Common myeloid progenitor, CD34-positive (primary cell): ENCODE measurements at regions of chr1 and their contacts with region 1.

Region 1: DNA sequence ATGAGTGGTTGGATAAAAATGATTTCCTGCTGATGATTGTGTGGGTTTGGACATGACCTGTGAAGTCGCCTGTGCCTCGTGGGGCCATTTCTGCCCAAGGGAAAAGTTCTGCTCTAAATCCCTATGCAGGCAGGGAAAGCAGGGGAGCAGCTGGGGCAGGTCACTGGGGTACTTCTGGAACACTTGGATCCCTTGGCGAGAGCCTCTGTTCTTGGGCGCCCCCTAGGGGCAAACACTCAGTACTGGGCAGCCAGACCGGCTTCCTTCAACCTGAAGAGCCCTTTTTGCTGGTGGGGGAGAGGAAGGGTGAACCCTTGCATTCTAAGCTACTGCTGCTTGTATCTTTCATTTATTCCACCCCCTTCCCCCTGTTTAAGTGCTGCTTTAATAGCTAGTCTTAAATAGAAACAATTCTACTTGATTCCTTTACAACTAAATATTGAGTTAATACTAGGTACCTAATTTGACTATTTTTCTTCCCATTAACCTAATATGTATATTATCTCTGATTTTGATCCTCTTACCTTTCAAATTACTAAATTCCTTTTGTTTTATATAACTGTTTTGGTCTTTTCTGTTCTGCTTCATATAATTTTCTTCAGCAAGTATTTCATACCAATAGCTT is 5.1 kb upstream of the CLEC20A start:
- DNase-seq: peak; percentile 58 to 80 (median 73)
- H3K4me3 ChIP-seq: no peak overlapping the region
- H3K27ac ChIP-seq: no peak overlapping the region
- H3K4me1 ChIP-seq: peaks cover 0 to 3% (median 0%) of the 10 kb centered on the region in 4 experiments
- H3K27me3 ChIP-seq: peaks cover 0 to 2% (median 0%) of the 10 kb centered on the region in 5 experiments

Region 2: DNA sequence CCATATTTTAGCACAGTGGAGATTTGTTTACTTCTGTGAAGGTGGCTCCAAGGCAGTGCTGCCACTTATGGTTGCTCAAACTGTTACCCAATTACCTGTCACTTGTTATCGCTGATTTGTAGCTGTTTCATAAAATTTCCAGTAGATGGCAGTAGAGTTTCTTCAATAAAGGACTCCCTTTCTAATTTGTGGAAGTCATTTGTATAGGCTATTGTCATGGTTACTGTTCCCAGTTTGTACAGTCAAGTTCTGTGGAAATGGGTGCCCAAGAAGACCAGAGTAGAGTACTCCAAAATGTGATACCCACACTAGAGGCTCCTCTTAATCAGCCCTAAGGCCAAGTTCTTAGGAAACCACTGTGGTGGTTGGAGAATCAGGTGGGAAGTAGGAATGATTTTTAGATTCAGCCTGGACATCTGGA is 191.1 kb before region 1 on chr1:
- CTCF ChIA-PET with region 1: interaction called, 20 read pairs
- POLR2A ChIA-PET with region 1: no interaction called
- DNase-seq: peak; percentile 68 to 82 (median 75)
- H3K4me3 ChIP-seq: no peak overlapping the region
- H3K27ac ChIP-seq: no peak overlapping the region
- H3K4me1 ChIP-seq: peaks cover 0 to 7% (median 0%) of the 10 kb centered on the region in 4 experiments
- H3K27me3 ChIP-seq: no peaks in the 10 kb centered on the region

Region 3: DNA sequence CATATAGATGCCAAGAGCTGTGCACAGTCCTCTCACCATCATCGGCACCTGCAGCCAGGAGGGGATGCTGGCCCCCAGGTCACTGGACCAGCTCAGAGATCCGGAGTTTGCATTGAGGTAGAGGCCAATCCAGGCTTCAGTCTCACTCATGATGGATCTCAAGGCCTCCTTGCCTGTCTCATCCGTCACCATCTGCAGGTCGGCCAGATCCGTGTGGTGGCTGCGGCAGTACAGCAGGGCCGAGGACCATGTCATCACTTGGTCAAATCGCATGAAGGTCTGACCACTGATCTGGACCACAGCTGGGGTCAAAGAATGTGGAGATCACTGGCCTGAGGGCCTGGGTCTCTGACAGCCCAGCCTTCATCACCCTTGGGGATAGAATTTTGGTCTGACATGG is 11.7 kb before region 1 on chr1:
- CTCF ChIA-PET with region 1: interaction called, 11 read pairs
- POLR2A ChIA-PET with region 1: no interaction called
- DNase-seq: no peak
- H3K4me3 ChIP-seq: no peak overlapping the region
- H3K27ac ChIP-seq: no peak overlapping the region
- H3K4me1 ChIP-seq: peaks cover 0 to 24% (median 10%) of the 10 kb centered on the region in 4 experiments
- H3K27me3 ChIP-seq: no peaks in the 10 kb centered on the region

Region 4: GRCh38 chr1:178513278-178514022 is 11.6 kb after region 1 on chr1:
- CTCF ChIA-PET with region 1: interaction called, 21 read pairs
- POLR2A ChIA-PET with region 1: no interaction called
- DNase-seq: no peak
- H3K4me3 ChIP-seq: no peak overlapping the region
- H3K27ac ChIP-seq: no peak overlapping the region
- H3K4me1 ChIP-seq: no peaks in the 10 kb centered on the region
- H3K27me3 ChIP-seq: no peaks in the 10 kb centered on the region

Region 5: DNA sequence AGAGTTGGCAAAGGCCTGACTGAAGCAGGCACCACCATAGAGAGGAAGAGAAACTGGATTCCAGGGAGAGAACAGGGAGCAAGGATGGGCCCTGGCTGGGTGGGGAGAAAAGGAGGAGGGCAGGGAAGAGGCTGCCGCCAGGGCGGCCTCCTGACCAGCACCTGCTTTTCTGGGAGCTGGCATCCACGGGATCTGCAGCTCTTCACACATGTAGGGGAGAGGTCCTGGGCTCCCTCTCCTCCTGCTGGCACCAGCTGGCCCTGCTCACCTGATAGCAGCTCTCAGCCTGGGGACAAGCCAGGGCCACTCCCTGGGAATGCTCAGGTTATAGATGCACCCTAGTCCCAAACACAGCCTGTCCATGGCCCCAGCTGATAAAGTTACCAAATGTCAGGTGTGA is 51.0 kb after region 1 on chr1:
- CTCF ChIA-PET with region 1: no interaction called
- POLR2A ChIA-PET with region 1: no interaction called
- DNase-seq: no peak
- H3K4me3 ChIP-seq: no peak overlapping the region
- H3K27ac ChIP-seq: no peak overlapping the region
- H3K4me1 ChIP-seq: no peaks in the 10 kb centered on the region
- H3K27me3 ChIP-seq: no peaks in the 10 kb centered on the region

Region 6: GRCh38 chr1:178629252-178630154 is 127.7 kb after region 1 on chr1:
- CTCF ChIA-PET with region 1: no interaction called
- POLR2A ChIA-PET with region 1: no interaction called
- DNase-seq: no peak
- H3K4me3 ChIP-seq: no peak overlapping the region
- H3K27ac ChIP-seq: no peak overlapping the region
- H3K4me1 ChIP-seq: no peaks in the 10 kb centered on the region
- H3K27me3 ChIP-seq: no peaks in the 10 kb centered on the region